Activated naive CD4-positive, alpha-beta T cell treated with anti-CD3 and anti-CD28 coated beads for 36 hours (primary cell): ENCODE measurements at regions of chr17 and their contacts with region 1.

Region 1: DNA sequence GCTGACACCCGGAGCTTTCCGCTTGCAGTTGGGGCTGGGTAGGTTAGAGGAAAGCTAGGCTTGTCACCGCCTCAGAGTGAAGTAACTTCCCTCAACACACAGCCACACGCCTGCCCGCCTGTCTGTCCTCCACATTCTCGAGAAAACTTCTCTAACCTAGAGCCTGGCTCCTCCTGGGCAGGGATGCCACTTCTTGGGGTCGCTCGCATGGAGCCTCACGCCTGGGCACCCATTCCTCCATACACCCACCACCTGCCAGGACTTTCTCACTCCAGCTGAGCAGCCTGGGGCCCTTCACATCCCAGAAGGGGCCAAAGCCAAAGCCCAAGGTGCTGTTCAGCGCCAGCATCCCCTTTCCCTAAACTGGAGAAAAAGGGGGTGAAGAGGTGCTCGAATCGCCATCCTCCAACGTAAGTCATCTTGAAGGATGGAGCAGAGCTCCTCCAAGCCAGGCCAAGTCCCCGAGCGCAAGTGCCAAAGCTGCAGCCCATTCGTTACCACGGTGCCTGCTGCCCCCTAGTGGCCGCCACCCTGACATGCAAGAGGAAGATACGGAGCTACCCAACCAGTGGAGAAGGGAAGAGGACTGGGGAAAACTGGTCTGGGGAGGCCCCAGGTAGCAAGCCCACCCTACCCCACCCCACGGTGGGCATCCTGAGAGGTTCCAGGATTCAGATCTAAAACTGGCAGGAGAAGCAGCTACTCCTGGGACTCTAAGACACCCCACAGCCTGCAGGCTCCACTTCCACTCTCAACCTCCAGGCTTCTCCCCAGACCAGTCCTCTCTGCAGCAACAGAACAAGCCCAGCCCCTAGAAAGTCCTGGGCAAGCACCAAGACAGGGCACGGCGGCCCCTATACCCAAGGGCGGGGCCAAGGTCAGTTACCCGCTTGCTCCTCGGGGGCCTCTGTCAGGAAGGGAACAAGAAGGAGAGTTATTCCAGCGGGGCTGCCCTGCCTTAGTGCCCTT is 63.1 kb downstream of the MYO18A start:
- DNase-seq: peak; percentile 88
- H3K4me3 Mint-ChIP-seq: no peak overlapping the region
- H3K27ac Mint-ChIP-seq: no peak overlapping the region
- H3K4me1 Mint-ChIP-seq: peaks cover 9% of the 10 kb centered on the region
- H3K27me3 Mint-ChIP-seq: no peaks in the 10 kb centered on the region

Region 2: DNA sequence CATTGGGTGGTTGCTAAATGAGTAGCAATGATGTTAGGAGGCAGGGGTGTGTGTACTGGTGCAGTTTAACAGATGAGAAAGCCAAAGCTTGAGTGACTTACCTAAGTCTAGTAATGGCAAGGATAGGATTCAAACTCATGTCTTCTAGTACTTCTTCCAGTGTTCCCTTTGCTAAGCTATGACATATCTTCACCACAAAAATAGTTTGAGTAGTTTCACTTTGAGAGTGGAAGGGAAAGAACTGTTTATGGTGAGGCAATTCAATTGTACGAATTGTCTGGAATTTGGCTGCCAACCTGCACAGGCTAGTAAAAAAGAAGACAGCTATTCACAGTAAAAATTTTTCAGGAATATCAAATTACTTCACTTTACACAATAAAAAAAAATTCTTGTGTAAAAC is 936.6 kb before region 1 on chr17:
- CTCF ChIA-PET with region 1: no interaction called
- intact Hi-C with region 1: no loop called
- DNase-seq: no peak
- H3K4me3 Mint-ChIP-seq: no peak overlapping the region
- H3K27ac Mint-ChIP-seq: no peak overlapping the region
- H3K4me1 Mint-ChIP-seq: no peaks in the 10 kb centered on the region
- H3K27me3 Mint-ChIP-seq: no peaks in the 10 kb centered on the region

Region 3: DNA sequence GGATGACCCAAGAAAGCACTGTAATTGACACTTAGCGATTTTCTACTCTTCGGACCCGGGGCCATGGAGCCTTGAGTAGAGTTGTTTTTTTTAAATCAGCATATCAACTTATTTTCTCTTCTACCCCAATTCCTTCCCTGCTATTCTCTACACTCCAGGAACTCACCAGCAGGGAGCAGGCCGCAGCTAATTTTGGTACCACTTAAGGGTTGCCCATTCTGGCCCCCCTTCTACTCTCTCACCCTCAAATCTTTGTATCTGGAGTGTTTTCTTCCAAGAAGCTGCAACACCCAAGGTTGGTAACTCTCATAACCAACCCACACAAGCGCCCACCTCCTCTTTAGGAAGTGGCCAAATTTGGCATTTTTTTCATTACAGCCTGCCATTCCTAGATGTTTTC is 267.8 kb before region 1 on chr17:
- CTCF ChIA-PET with region 1: no interaction called
- intact Hi-C with region 1: loop called (anchors 2 kb)
- DNase-seq: peak; percentile 60
- H3K4me3 Mint-ChIP-seq: no peak overlapping the region
- H3K27ac Mint-ChIP-seq: no peak overlapping the region
- H3K4me1 Mint-ChIP-seq: no peaks in the 10 kb centered on the region
- H3K27me3 Mint-ChIP-seq: no peaks in the 10 kb centered on the region

Region 4: DNA sequence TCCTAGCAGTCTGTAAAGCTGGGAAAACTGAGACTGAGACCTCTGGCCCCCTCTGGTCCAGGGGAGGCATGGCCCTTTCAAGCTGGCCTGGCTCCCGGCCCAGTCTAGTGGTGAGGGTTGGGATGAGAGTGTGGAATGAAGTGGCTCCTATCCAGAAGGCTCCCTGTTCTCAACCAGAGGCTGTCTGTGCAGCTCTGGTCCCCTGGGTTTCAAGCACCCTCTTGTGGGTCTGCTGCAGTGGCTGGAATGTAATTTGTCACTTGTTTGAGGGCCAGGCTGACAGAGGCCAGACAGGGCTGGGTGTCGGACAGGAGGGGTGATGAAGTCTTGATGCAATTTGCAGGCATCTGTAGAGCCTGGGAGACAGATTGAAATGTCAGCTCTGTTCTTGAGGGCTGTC is 143.7 kb before region 1 on chr17:
- CTCF ChIA-PET with region 1: interaction called, 47 read pairs
- intact Hi-C with region 1: no loop called
- DNase-seq: no peak
- H3K4me3 Mint-ChIP-seq: no peak overlapping the region
- H3K27ac Mint-ChIP-seq: no peak overlapping the region
- H3K4me1 Mint-ChIP-seq: no peaks in the 10 kb centered on the region
- H3K27me3 Mint-ChIP-seq: no peaks in the 10 kb centered on the region

Region 5: DNA sequence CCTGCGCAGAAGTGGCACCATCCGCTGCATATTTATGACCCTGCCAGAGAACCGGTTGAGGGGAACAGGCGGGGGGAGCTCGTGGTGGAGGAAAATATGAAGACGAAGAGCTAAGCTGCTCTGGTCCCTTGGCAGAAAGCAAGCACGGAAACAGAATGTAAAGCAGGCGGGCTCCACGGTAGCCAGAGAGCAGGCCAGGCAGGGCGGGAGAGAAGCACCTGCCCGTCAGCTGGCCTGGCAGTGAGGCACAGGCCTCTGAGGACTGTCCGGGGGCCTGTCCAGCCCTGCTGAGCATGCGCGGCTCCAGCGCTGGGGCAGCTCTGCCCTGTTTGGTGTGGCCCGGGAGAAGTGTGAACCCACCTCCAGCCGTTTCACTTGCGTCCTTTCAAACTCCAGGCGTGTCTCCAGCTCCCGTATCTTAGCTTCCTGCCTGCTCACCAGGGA is 27.5 kb before region 1 on chr17:
- CTCF ChIA-PET with region 1: interaction called, 21 read pairs
- intact Hi-C with region 1: no loop called
- DNase-seq: no peak
- H3K4me3 Mint-ChIP-seq: no peak overlapping the region
- H3K27ac Mint-ChIP-seq: no peak overlapping the region
- H3K4me1 Mint-ChIP-seq: no peaks in the 10 kb centered on the region
- H3K27me3 Mint-ChIP-seq: no peaks in the 10 kb centered on the region

Region 6: DNA sequence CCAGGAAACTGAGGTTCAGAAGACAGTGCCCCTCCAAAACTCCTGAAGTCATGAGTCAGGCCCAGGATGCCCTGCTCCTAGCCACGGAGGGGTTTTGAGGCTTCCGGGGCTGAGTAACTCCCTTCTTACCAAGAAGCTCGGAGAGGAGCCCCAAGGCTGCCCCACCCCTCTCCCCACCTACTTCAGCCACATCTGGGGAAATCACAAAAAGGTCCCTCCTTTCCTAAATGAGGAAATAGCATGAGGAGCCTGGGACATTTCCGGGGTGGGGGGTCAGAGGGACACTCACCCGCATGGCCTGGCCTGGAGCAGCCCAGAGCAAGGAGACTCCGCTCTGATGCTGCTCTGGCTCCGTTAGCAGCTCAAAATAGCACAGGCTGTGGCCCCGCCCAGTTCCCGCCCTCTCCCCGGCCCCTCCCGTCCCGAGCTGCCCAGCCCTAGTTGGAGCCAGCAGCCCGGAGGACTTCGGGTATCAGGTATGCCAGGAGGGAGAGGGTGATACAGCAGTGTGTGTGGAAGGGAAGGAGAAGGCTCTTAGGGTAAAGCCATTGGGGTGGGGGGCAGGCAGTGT is 23.0 kb after region 1 on chr17:
- CTCF ChIA-PET with region 1: interaction called, 82 read pairs
- intact Hi-C with region 1: no loop called
- DNase-seq: peak; percentile 89
- H3K4me3 Mint-ChIP-seq: peak overlapping the region; percentile 83
- H3K27ac Mint-ChIP-seq: peak overlapping the region; percentile 93
- H3K4me1 Mint-ChIP-seq: peaks cover 66% of the 10 kb centered on the region
- H3K27me3 Mint-ChIP-seq: no peaks in the 10 kb centered on the region

Region 7: DNA sequence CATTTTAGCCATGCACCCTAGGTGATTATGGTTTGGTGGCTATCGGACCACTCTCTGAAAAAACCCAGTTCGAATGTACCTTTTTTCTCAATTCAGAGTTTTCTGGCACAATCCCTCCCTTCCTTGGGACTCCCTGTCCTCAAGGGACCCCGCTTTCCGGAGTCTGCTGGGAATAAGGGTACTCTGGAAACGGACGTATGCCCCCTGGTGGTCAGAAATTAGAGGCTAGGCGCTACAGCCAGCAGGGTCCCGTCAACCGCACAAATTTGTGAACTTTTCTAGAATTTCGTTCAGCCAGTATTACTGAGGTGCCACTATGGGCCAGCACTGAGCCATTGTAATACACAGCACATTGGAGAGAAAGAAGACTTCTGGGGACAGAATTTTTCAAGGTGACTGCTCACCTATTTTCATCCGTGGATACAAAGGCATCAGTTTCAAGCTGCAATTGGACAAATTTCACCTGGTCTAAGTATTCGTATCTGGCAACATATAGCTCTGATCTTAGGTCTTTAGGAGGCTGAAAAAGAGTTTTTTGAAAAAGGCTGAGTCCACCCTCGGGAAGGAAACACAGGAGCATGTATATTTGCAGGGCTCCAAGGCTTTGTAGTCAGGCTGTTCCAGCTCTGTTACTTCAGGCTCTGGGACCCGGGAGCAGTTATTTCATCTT is 102.4 kb after region 1 on chr17:
- CTCF ChIA-PET with region 1: interaction called, 14 read pairs
- intact Hi-C with region 1: no loop called
- DNase-seq: peak; percentile 85
- H3K4me3 Mint-ChIP-seq: no peak overlapping the region
- H3K27ac Mint-ChIP-seq: no peak overlapping the region
- H3K4me1 Mint-ChIP-seq: peaks cover 4% of the 10 kb centered on the region
- H3K27me3 Mint-ChIP-seq: no peaks in the 10 kb centered on the region